ENCODE measurements at regions of chr6 and their contacts with region 1.

Region 1: GRCh38 chr6:100479179-100480035 is 14.7 kb upstream of the SIM1 start:
- DNase-seq: no peak
- H3K4me3 ChIP-seq: no peak overlapping the region
- H3K27ac ChIP-seq: no peak overlapping the region
- H3K4me1 ChIP-seq: no peaks in the 10 kb centered on the region
- H3K27me3 ChIP-seq: peaks cover 12% of the 10 kb centered on the region
- CTCF ChIP-seq: peak; percentile 59 to 83 (median 73)
- POLR2A ChIP-seq: no peak

Region 2: DNA sequence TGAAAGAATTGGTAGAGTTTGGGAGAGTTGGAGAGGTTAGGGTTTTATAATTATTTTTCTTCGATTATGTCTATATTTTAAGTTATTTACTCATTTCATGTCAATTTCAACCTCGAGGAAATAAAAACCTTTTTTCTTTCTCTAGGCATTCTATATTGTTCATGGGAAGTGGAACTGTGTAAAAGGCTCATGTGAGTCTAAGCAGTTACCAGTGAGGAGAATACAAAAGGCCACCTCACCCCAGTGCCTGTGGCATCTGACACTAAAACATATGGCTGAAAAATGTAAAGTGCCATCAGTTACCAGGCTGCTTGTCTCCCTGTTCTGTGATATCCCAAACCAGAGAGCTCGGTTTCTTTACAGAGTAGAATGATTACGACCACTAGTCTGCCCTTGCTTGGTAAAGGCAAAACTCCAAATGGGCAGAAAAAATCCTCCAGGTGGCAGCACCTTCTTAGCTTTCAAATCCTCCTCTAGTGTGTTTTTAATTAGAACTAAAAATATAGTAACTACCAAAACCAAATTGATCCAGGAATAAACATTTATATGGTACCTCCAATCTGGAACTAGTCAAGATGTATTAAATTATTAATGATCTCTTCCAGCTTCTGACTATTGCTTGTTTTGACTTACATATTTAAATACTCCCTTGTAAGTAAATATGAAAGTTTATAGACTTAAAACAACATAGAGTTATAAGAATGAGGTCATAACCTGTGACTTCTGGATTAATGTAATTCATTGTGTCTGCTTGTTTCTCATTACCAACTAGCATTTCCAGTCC is 362.8 kb before region 1 on chr6:
- intact Hi-C with region 1: loop called (anchors 5 kb)
- DNase-seq: peak; percentile 14 to 72 (median 32)
- H3K4me3 ChIP-seq: no peak overlapping the region
- H3K27ac ChIP-seq: no peak overlapping the region
- H3K4me1 ChIP-seq: no peaks in the 10 kb centered on the region
- H3K27me3 ChIP-seq: peaks cover 4% of the 10 kb centered on the region
- CTCF ChIP-seq: peak; percentile 31 to 69 (median 50)
- POLR2A ChIP-seq: no peak

Region 3: DNA sequence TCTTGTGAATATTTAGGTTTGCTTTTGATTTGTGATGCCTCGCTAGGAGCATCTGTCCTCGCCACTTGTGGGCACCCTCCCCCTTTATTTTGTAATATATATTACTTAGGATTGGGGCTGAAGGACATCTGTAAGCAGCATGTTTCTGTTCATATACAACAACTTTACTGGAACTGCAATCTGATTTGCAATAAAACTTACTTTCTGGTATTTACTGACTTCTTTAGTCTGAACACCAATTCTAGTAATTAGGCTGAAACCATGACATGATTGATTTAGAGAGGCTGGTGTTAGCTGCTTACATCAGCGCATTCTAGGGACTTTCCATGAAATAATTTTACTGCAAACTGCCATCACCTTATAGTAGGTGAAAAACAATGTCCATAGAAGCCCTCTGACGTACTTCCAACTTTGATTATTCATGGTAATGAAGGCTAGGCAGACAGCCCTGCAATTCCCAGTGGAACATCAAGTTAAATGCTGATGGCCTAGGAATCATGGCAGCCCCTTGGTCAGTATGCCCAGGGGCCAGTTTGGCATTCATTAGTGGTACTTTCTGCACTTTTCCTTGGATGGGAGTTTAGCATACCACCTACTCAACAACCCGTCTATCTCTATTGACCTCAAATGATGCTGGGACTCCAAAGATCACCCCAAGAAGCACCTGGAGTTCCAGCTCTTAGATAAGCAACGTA is 352.5 kb before region 1 on chr6:
- intact Hi-C with region 1: no loop called
- DNase-seq: no peak
- H3K4me3 ChIP-seq: no peak overlapping the region
- H3K27ac ChIP-seq: no peak overlapping the region
- H3K4me1 ChIP-seq: no peaks in the 10 kb centered on the region
- H3K27me3 ChIP-seq: no peaks in the 10 kb centered on the region
- CTCF ChIP-seq: no peak
- POLR2A ChIP-seq: no peak

Region 4: GRCh38 chr6:100246206-100246605 is 233.2 kb before region 1 on chr6:
- intact Hi-C with region 1: loop called in 1 of 2 experiments (anchors 10 kb)
- DNase-seq: no peak
- H3K4me3 ChIP-seq: no peak overlapping the region
- H3K27ac ChIP-seq: no peak overlapping the region
- H3K4me1 ChIP-seq: no peaks in the 10 kb centered on the region
- H3K27me3 ChIP-seq: no peaks in the 10 kb centered on the region
- CTCF ChIP-seq: no peak
- POLR2A ChIP-seq: no peak

Region 5: DNA sequence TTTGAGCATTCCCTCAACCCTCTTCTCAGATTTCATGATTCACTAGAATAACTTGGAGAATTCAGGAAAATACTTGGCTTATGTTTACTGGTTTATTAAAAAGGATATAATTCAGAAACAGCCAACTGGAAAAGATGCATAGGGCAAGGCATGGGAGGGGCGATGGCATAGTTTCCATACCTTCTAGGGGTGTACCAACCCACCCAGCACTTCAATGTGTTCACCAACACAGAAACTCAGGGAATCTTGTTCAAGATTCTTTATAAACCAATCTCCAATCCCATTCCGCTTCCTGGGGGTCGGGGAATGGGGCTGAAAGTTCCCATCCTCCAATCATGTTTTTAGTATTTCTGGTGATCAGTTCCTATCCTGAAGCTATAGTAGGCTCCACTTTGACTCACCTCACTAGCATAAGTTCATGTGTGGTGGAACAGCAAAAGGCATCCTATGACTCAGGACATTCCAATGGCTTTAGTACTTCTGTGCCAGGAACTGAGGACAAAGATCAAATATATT is 179.1 kb before region 1 on chr6:
- intact Hi-C with region 1: no loop called
- DNase-seq: no peak
- H3K4me3 ChIP-seq: no peak overlapping the region
- H3K27ac ChIP-seq: no peak overlapping the region
- H3K4me1 ChIP-seq: no peaks in the 10 kb centered on the region
- H3K27me3 ChIP-seq: no peaks in the 10 kb centered on the region
- CTCF ChIP-seq: no peak
- POLR2A ChIP-seq: no peak

Region 6: DNA sequence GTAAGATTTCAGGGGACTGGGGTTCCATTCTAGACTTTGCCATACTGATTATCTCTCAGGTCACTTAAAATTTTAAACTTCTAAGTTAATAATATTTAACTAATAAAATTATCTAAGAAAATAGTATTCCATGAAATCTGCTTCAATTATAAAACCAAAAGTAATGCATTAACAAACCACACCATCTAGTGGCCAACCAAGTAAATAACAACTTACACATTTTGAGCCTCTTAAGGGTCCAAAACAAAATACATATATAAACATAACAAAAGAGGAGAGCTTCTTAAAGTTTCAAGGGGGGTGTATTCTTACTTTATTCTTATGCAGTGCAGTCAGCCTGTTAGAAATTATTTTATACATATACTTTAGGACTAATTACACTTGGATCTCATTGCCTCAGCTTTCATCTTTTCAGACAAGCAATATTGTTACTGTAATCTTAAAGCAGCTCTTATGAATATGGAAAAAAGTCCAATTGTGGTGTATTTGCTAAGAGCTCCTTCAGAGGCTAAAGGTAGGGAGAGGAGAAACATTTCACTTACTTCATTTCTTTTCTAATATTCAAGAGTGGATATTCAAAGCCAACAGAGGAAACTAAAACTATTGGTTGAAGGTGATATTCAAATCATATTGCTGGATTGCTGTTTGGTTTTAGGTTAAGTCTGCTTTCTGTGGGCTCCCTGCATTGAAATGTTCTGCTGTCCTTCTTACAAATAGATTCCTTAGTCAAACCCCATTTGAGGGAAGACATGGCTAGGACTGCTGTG is 185.1 kb after region 1 on chr6:
- intact Hi-C with region 1: loop called in 1 of 2 experiments (anchors 10 kb)
- DNase-seq: no peak
- H3K4me3 ChIP-seq: no peak overlapping the region
- H3K27ac ChIP-seq: no peak overlapping the region
- H3K4me1 ChIP-seq: no peaks in the 10 kb centered on the region
- H3K27me3 ChIP-seq: no peaks in the 10 kb centered on the region
- CTCF ChIP-seq: peak; percentile 45 to 79 (median 62)
- POLR2A ChIP-seq: no peak

Measured in adrenal gland (tissue), 19 donors.